ENCODE measurements at regions of chr5 and their contacts with region 1.

Region 1: GRCh38 chr5:32585446-32586275 is at the start of gene SUB1:
- DNase-seq: peak; percentile 91
- H3K4me3 Mint-ChIP-seq: peak within 1 kb of the TSS; percentile 94
- H3K27ac Mint-ChIP-seq: peak within 1 kb of the TSS; percentile 99
- H3K4me1 Mint-ChIP-seq: peaks cover 70% of the 10 kb centered on the region
- H3K27me3 Mint-ChIP-seq: no peaks in the 10 kb centered on the region
- total RNA-seq, gene SUB1: 408 and 428 TPM in 2 replicates

Region 2: DNA sequence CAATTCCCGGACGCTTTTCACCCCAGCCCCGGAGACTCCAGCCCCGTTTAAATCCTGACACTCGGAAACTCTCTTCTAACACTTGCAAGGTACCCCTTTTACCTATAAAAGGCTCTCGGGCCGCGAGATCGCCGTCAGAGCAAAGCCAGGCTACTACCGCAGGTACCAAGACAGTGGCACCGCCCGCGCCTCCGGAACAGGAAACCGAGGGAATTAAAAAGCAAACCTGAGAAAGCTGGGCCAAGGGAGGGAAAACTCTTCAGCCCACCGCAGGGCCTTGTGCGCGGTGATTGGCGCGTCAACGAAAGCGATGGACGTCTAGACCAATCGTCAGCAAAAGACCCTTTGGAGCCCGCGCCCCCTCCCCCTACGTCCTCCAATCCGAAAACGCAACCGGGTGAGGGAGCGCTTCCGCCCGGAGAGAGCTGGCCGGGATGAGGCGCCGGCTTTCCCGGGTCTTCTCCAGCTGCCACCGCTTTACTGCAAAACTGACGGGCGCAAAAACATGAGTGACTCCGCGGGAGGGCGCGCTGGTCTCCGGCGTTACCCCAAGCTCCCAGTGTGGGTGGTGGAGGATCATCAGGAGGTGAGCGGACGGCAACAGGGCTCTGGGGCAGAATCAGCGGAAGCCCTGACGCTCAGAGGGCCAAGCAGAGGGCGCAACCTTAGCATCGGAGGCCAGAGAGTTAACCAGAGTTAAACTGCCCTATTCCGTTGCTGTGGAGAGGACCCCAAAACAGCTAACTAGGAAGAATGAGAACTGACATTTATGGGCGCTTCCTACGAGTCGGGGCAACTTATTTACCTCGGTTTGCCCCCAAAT is 1053.6 kb before region 1 on chr5 and contains the starts of genes C5orf22 and DROSHA:
- intact Hi-C with region 1: loop called (anchors 5 kb)
- DNase-seq: peak; percentile 89
- H3K4me3 Mint-ChIP-seq: peak within 1 kb of the TSS; percentile 100
- H3K27ac Mint-ChIP-seq: peak within 1 kb of the TSS; percentile 96
- H3K4me1 Mint-ChIP-seq: peaks cover 55% of the 10 kb centered on the region
- H3K27me3 Mint-ChIP-seq: no peaks in the 10 kb centered on the region
- total RNA-seq, gene C5orf22: 30.1 and 36.6 TPM in 2 replicates
- total RNA-seq, gene DROSHA: 74.0 and 87.6 TPM in 2 replicates

Region 3: GRCh38 chr5:32312647-32313523 is 272.8 kb before region 1 on chr5 and contains the start of gene MTMR12:
- intact Hi-C with region 1: loop called (anchors 1 kb)
- DNase-seq: peak; percentile 100
- H3K4me3 Mint-ChIP-seq: peak within 1 kb of the TSS; percentile 96
- H3K27ac Mint-ChIP-seq: peak within 1 kb of the TSS; percentile 95
- H3K4me1 Mint-ChIP-seq: peaks cover 38% of the 10 kb centered on the region
- H3K27me3 Mint-ChIP-seq: no peaks in the 10 kb centered on the region
- total RNA-seq, gene MTMR12: 26.2 and 29.9 TPM in 2 replicates

Region 4: GRCh38 chr5:32444431-32445286 is 141.0 kb before region 1 on chr5 and contains the start of gene ZFR:
- intact Hi-C with region 1: loop called (anchors 1 kb)
- DNase-seq: peak; percentile 94
- H3K4me3 Mint-ChIP-seq: peak within 1 kb of the TSS; percentile 97
- H3K27ac Mint-ChIP-seq: peak within 1 kb of the TSS; percentile 98
- H3K4me1 Mint-ChIP-seq: peaks cover 29% of the 10 kb centered on the region
- H3K27me3 Mint-ChIP-seq: peaks cover 12% of the 10 kb centered on the region
- total RNA-seq, gene ZFR: 67.7 and 70.8 TPM in 2 replicates

Region 5: DNA sequence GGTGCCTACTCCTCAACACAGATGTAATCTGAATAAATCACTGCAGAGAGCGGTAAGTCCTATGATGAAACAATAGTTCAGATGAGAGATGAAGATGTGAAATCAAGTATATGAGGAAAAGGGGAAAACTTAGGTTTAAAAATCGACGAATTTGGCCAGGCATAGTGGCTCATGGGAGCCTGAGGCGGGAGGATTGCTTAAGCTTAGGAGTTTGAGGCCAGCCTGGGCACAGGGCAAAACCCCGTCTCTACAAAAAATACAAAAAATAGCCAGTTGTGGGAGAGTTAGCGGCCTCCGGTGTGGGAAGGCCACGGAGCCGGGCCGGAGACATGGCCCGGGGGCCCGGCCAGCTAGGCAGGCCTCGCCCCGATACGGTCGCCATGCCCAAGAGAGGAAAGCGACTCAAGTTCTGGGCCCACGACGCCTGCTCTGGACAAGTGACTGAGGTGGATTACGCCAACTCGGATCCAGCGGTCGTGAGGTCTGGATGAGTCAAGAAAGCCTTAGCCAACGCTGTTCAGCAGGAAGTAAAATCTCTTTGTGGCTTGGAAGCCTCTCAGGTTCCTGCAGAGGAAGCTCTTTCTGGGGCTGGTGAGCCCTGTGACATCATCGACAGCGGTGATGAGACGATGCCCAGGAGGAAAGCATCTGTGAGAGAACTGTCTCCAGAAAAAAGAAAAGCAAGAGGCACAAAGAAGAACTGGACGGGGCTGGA is 63.1 kb before region 1 on chr5:
- intact Hi-C with region 1: loop called (anchors 1 kb)
- DNase-seq: peak; percentile 60
- H3K4me3 Mint-ChIP-seq: peak overlapping the region; percentile 24
- H3K27ac Mint-ChIP-seq: peak overlapping the region; percentile 56
- H3K4me1 Mint-ChIP-seq: peaks cover 40% of the 10 kb centered on the region
- H3K27me3 Mint-ChIP-seq: no peaks in the 10 kb centered on the region

Region 6: GRCh38 chr5:32542216-32543059 is 43.2 kb before region 1 on chr5:
- intact Hi-C with region 1: loop called (anchors 1 kb)
- DNase-seq: peak; percentile 59
- H3K4me3 Mint-ChIP-seq: peak overlapping the region; percentile 59
- H3K27ac Mint-ChIP-seq: peak overlapping the region; percentile 92
- H3K4me1 Mint-ChIP-seq: peaks cover 68% of the 10 kb centered on the region
- H3K27me3 Mint-ChIP-seq: no peaks in the 10 kb centered on the region

Region 7: GRCh38 chr5:32572778-32573480 is 12.7 kb before region 1 on chr5:
- intact Hi-C with region 1: no loop called
- DNase-seq: no peak
- H3K4me3 Mint-ChIP-seq: no peak overlapping the region
- H3K27ac Mint-ChIP-seq: no peak overlapping the region
- H3K4me1 Mint-ChIP-seq: peaks cover 10% of the 10 kb centered on the region
- H3K27me3 Mint-ChIP-seq: no peaks in the 10 kb centered on the region

Region 8: GRCh38 chr5:34007621-34008600 is 1422.2 kb after region 1 on chr5 and contains the start of gene AMACR:
- intact Hi-C with region 1: loop called (anchors 5 kb)
- DNase-seq: peak; percentile 87
- H3K4me3 Mint-ChIP-seq: peak within 1 kb of the TSS; percentile 85
- H3K27ac Mint-ChIP-seq: peak within 1 kb of the TSS; percentile 79
- H3K4me1 Mint-ChIP-seq: peaks cover 33% of the 10 kb centered on the region
- H3K27me3 Mint-ChIP-seq: no peaks in the 10 kb centered on the region
- total RNA-seq, gene AMACR: 6.8 and 7.1 TPM in 2 replicates

Measured in activated T-helper 1 cell treated with anti-CD3 and anti-CD28 coated beads, Interleukin-12 subunit alpha, Interleukin-12 subunit beta, Interleukin-2, Interleukin-4 antibody, amounts not matched to agents 30 ng/mL and 10 ng/mL and 1 ng/mL, durations not matched to agents 14 hours and 24 hours and 36 hours (primary cell).